Activated naive CD4-positive, alpha-beta T cell treated with anti-CD3 and anti-CD28 coated beads for 36 hours (primary cell): ENCODE measurements at regions of chr10 and their contacts with region 1.

Region 1: GRCh38 chr10:88582806-88583583 is at the start of gene RNLS:
- DNase-seq: peak; percentile 76
- H3K4me3 Mint-ChIP-seq: peak within 1 kb of the TSS; percentile 82
- H3K27ac Mint-ChIP-seq: peak within 1 kb of the TSS; percentile 89
- H3K4me1 Mint-ChIP-seq: peaks cover 11% of the 10 kb centered on the region
- H3K27me3 Mint-ChIP-seq: peaks cover 5% of the 10 kb centered on the region
- total RNA-seq, gene RNLS: 4.0 to 4.4 TPM

Region 2: GRCh38 chr10:88565072-88565471 is 17.9 kb before region 1 on chr10:
- CTCF ChIA-PET with region 1: interaction called, 14 read pairs
- intact Hi-C with region 1: no loop called
- DNase-seq: no peak
- H3K4me3 Mint-ChIP-seq: no peak overlapping the region
- H3K27ac Mint-ChIP-seq: no peak overlapping the region
- H3K4me1 Mint-ChIP-seq: no peaks in the 10 kb centered on the region
- H3K27me3 Mint-ChIP-seq: no peaks in the 10 kb centered on the region

Region 3: DNA sequence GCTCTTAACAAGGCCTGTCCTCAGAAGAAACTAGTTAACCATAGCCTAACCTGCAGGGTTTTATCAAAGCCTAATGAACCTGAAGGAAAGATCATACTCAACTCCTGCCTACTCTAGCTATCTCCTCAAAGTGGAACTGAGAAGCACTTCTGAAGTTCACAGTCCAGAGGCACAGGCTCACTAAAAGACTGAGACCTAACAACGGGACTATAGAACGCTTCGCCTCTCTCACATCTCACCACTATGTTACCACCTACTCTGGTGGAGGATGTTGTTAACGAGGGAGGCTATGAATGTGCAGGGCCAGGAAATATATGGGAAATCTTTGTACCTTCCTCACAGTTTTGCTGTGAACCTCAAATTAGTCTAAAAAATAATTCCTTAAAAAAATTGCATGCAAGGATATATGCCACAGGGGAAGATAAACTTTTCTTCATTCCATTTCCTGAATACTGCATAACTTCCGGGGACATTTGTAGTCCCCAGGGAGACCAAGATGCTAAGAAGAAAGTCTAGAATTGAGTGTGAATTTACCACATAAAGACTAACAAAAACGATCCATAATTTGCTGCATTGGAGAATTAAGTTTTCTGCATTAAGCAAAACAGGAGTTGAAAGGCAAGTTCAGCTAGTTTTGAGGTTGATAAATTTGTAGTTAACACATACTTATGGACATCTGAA is 25.2 kb after region 1 on chr10:
- CTCF ChIA-PET with region 1: no interaction called
- intact Hi-C with region 1: no loop called
- DNase-seq: no peak
- H3K4me3 Mint-ChIP-seq: no peak overlapping the region
- H3K27ac Mint-ChIP-seq: no peak overlapping the region
- H3K4me1 Mint-ChIP-seq: no peaks in the 10 kb centered on the region
- H3K27me3 Mint-ChIP-seq: no peaks in the 10 kb centered on the region

Region 4: DNA sequence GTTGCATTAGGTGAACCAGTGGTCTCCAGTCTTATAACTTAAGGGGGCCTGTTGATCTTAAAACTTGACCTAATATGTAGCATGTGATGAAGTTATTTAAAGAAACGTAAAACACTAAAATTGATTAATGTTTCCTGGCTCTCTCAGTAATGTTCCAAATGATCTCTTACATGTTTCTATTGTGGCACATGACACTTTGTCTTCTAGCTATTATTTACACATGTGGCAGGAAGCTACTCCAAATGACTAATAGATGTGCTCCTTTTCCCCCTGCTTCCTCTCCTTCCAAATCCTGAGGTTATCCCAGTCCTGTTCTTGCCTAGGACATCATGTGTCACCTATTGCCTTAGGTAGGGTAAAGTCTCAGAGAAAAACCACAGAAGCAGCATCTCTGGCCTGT is 497.0 kb after region 1 on chr10:
- CTCF ChIA-PET with region 1: no interaction called
- intact Hi-C with region 1: loop called (anchors 5 kb)
- DNase-seq: no peak
- H3K4me3 Mint-ChIP-seq: no peak overlapping the region
- H3K27ac Mint-ChIP-seq: no peak overlapping the region
- H3K4me1 Mint-ChIP-seq: peaks cover 10% of the 10 kb centered on the region
- H3K27me3 Mint-ChIP-seq: no peaks in the 10 kb centered on the region

Region 5: GRCh38 chr10:89942217-89942616 is 1359.2 kb after region 1 on chr10:
- CTCF ChIA-PET with region 1: no interaction called
- intact Hi-C with region 1: no loop called
- DNase-seq: no peak
- H3K4me3 Mint-ChIP-seq: no peak overlapping the region
- H3K27ac Mint-ChIP-seq: no peak overlapping the region
- H3K4me1 Mint-ChIP-seq: peaks cover 6% of the 10 kb centered on the region
- H3K27me3 Mint-ChIP-seq: no peaks in the 10 kb centered on the region